Mammary epithelial cell (primary cell): ENCODE measurements at regions of chr7 and their contacts with region 1.

Region 1: GRCh38 chr7:70506434-70506833 is 625.5 kb upstream of the GALNT17 start:
- DNase-seq: no peak
- H3K4me3 ChIP-seq: no peak overlapping the region
- H3K27ac ChIP-seq: no peak overlapping the region
- H3K4me1 ChIP-seq: no peaks in the 10 kb centered on the region
- H3K27me3 ChIP-seq: no peaks in the 10 kb centered on the region
- CTCF ChIP-seq: peak in 1 of 2 donors; percentile 17

Region 2: GRCh38 chr7:70193514-70193913 is 312.9 kb before region 1 on chr7:
- CTCF ChIA-PET with region 1: no interaction called
- dilution Hi-C with region 1: no loop called
- in situ Hi-C with region 1: no loop called
- intact Hi-C with region 1: loop called (anchors 1 kb)
- DNase-seq: peak; percentile 14
- H3K4me3 ChIP-seq: no peak overlapping the region
- H3K27ac ChIP-seq: no peak overlapping the region
- H3K4me1 ChIP-seq: no peaks in the 10 kb centered on the region
- H3K27me3 ChIP-seq: no peaks in the 10 kb centered on the region
- CTCF ChIP-seq: peak; percentile 29 to 51

Region 3: DNA sequence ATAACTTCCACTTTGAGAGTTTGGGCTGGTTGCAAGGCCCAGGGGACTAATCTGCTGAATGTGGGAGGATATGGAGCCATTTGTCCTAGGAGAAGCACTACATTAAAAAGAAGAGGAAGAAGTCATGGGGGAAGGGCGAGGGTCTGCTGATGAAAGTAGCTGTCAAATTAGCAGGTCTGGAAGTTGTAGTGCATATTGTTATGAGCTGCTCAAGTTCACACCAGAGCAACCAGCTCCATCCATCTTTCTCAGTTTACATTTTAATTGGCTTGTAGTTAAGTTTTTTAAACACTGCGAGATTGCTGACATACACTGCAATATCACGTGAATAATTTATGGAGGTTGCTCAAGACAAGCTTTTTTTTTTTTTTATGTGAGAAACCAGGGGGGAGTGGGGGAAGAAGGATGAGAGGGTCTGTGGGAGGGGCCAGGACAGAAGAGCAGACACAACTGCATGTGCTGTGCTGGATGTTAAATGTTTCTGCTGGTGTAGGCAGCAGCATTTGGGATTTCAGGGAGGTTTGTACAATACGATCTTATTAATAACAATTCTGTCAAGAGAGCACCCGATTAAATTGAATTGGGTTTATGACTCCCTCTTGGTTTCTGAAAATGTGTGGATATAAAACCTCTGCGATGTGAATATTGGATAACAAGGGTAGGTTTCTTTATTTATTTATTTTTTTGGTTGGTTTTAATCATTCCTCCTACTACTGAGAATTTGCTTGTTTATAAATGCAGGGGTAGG is 133.5 kb before region 1 on chr7:
- CTCF ChIA-PET with region 1: no interaction called
- dilution Hi-C with region 1: no loop called
- in situ Hi-C with region 1: no loop called
- intact Hi-C with region 1: no loop called
- DNase-seq: no peak
- H3K4me3 ChIP-seq: no peak overlapping the region
- H3K27ac ChIP-seq: no peak overlapping the region
- H3K4me1 ChIP-seq: no peaks in the 10 kb centered on the region
- H3K27me3 ChIP-seq: no peaks in the 10 kb centered on the region
- CTCF ChIP-seq: no peak